Activated B cell treated with CpG ODN at 0.5 μM for 24 hours (primary cell): ENCODE measurements at regions of chr13 and their contacts with region 1.

Region 1: DNA sequence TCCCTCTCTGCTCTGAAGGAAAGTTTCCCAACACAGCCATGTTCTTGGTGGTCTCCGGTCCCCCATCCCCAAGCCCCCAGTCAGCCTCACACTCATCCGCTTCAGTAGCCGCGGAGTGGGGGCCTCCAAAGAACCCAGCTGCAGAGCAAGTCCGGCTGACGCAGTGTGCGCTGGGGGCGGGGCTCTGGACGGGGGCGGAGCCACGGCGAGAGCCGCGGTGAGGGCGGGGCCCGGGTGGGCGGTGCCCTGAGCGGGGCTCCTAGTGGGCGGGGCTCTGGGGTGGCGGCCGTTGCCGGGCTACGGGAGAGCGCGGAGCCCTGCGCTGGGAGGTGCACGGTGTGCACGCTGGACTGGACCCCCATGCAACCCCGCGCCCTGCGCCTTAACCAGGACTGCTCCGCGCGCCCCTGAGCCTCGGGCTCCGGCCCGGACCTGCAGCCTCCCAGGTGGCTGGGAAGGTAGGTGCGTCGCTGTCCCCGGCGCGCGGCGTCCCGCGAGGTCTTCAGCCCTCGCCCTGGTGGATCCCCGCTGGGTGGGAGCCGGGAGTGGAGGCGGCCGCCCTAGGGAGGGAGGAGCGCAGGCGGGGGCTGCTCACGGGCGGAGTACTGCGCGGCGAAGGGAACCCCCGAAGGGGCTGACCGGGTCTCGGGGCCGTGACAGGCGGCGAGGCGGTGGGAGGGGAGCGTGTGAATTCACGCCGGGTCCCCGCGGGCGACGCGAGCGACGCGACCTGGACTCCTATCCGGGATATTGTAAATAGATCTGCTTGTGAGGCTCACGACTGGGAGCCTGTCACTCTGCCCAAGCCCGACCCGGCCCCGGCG is 9.1 kb downstream of the TNFRSF19 start:
- DNase-seq: peak; percentile 95
- ATAC-seq: peak; percentile 97
- H3K4me3 Mint-ChIP-seq: peak overlapping the region; percentile 79
- H3K27ac Mint-ChIP-seq: peak overlapping the region; percentile 41
- H3K4me1 Mint-ChIP-seq: peaks cover 11% of the 10 kb centered on the region
- H3K27me3 Mint-ChIP-seq: peaks cover 31% of the 10 kb centered on the region
- CTCF ChIP-seq: no peak

Region 2: DNA sequence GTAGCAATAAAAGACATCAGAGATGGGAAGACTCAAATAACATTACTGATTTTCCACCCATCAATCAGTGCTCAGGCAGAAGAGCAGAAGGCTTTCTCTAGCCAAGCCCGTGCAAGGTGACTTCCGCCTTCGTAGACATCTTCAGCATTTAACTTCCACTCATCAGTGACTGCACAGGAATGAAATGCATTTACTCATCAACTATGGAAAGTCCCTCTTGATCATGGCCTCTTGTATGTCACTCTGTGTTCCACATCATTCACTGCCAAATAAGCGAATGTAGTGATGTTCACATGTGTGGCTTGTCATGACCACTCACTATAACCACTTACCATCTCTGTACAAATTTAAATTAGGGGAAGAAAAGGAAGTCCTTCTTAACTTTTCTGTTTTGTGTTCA is 195.2 kb before region 1 on chr13:
- CTCF ChIA-PET with region 1: no interaction called
- POLR2A ChIA-PET with region 1: interaction called, 7 read pairs
- intact Hi-C with region 1: loop called (anchors 2 kb)
- DNase-seq: no peak
- ATAC-seq: peak; percentile 98
- H3K4me3 Mint-ChIP-seq: peak overlapping the region; percentile 36
- H3K27ac Mint-ChIP-seq: peak overlapping the region; percentile 87
- H3K4me1 Mint-ChIP-seq: peaks cover 35% of the 10 kb centered on the region
- H3K27me3 Mint-ChIP-seq: no peaks in the 10 kb centered on the region
- CTCF ChIP-seq: no peak

Region 3: GRCh38 chr13:23695711-23696464 is 116.6 kb after region 1 on chr13:
- CTCF ChIA-PET with region 1: no interaction called
- POLR2A ChIA-PET with region 1: no interaction called
- intact Hi-C with region 1: loop called (anchors 1 kb)
- DNase-seq: peak; percentile 65
- ATAC-seq: peak; percentile 98
- H3K4me3 Mint-ChIP-seq: peak overlapping the region; percentile 77
- H3K27ac Mint-ChIP-seq: peak overlapping the region; percentile 93
- H3K4me1 Mint-ChIP-seq: peaks cover 17% of the 10 kb centered on the region
- H3K27me3 Mint-ChIP-seq: peaks cover 5% of the 10 kb centered on the region
- CTCF ChIP-seq: no peak

Region 4: DNA sequence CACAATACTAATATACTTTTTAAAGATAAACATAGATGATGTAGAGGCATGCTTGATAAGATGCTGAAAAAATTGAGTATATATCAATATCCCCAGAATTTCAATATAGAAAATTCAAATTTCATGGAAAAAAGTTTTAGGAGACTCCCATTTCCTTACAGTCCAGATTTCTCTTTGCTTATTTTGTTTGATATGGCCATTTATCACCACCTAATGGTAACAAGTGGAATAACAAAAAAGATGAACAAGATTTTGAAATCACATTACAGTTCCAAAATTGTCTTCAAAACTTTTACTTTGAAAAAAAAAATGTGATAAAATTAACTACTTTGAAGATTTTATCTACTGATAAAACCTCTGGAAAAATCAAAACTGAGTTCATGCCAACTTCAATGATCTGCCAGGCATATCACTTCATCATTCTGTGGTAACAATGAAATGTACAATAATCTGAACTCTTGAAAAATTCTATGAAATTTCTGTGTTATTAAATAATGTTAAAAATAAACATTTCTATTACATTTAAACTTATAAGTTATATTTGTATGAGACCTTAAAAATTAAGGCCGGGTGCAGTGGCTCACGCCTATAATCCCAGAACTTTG is 292.4 kb after region 1 on chr13:
- CTCF ChIA-PET with region 1: interaction called, 3 read pairs
- POLR2A ChIA-PET with region 1: no interaction called
- intact Hi-C with region 1: loop called (anchors 1 kb)
- DNase-seq: no peak
- ATAC-seq: no peak
- H3K4me3 Mint-ChIP-seq: no peak overlapping the region
- H3K27ac Mint-ChIP-seq: no peak overlapping the region
- H3K4me1 Mint-ChIP-seq: peaks cover 14% of the 10 kb centered on the region
- H3K27me3 Mint-ChIP-seq: no peaks in the 10 kb centered on the region
- CTCF ChIP-seq: peak; percentile 78

Region 5: GRCh38 chr13:24160454-24161009 is 581.2 kb after region 1 on chr13 and contains the start of gene SPATA13:
- CTCF ChIA-PET with region 1: no interaction called
- POLR2A ChIA-PET with region 1: no interaction called
- intact Hi-C with region 1: loop called (anchors 1 kb)
- DNase-seq: peak; percentile 86
- ATAC-seq: peak; percentile 98
- H3K4me3 Mint-ChIP-seq: peak within 1 kb of the TSS; percentile 83
- H3K27ac Mint-ChIP-seq: no peak within 1 kb of the TSS
- H3K4me1 Mint-ChIP-seq: peaks cover 18% of the 10 kb centered on the region
- H3K27me3 Mint-ChIP-seq: peaks cover 11% of the 10 kb centered on the region
- CTCF ChIP-seq: no peak
- total RNA-seq, gene SPATA13: 10.6 and 11.8 TPM in 2 replicates

Region 6: GRCh38 chr13:24270639-24271141 is 691.4 kb after region 1 on chr13:
- CTCF ChIA-PET with region 1: no interaction called
- POLR2A ChIA-PET with region 1: no interaction called
- intact Hi-C with region 1: loop called (anchors 5 kb)
- DNase-seq: no peak
- ATAC-seq: peak; percentile 55
- H3K4me3 Mint-ChIP-seq: peak overlapping the region; percentile 87
- H3K27ac Mint-ChIP-seq: peak overlapping the region; percentile 95
- H3K4me1 Mint-ChIP-seq: peaks cover 76% of the 10 kb centered on the region
- H3K27me3 Mint-ChIP-seq: no peaks in the 10 kb centered on the region
- CTCF ChIP-seq: no peak

Region 7: DNA sequence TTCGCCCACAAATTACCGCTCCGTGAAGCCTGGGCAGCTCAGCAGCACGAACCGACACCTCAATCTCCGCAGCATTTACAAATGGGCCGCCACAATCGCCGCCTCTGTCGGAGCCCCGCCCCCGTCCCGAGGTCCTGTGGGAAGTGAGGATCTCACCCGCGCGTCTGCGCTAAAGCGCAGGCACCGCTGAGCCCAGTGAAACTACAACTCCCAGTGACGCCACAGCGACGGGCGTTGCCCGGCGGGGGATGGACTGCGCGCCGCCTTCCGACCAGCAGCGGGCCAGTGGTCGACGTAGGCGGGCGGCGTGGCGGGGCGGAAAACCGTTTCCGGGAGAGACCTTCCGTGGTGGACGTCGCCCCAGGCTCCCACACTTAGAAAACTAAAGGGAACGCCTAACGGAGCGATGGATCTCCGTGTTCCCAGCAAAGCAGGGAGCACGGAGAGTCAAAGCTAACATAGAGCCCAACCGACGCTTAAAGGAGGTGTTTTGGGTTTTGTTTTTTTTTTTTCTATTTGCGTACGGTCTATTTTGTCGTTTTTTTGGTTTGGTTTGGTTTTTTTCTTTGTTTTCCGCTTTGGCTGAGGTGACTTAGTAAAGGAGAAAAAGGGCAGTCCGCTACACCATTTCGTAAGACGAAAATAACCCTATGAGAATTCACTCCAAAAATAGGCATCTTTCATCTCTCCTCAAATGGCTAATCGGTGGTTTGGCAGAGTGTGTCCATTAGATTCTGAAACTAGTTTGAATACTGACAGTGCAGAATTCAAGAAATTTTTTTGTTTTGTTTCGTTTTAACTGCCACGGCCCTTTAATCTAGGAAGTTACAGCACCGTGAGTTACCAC is 1343.7 kb after region 1 on chr13:
- CTCF ChIA-PET with region 1: no interaction called
- POLR2A ChIA-PET with region 1: no interaction called
- intact Hi-C with region 1: loop called (anchors 1 kb)
- DNase-seq: peak; percentile 91
- ATAC-seq: peak; percentile 97
- H3K4me3 Mint-ChIP-seq: peak overlapping the region; percentile 91
- H3K27ac Mint-ChIP-seq: peak overlapping the region; percentile 97
- H3K4me1 Mint-ChIP-seq: peaks cover 16% of the 10 kb centered on the region
- H3K27me3 Mint-ChIP-seq: no peaks in the 10 kb centered on the region
- CTCF ChIP-seq: no peak